ENCODE measurements at regions of chr11 and their contacts with region 1.

Region 1: DNA sequence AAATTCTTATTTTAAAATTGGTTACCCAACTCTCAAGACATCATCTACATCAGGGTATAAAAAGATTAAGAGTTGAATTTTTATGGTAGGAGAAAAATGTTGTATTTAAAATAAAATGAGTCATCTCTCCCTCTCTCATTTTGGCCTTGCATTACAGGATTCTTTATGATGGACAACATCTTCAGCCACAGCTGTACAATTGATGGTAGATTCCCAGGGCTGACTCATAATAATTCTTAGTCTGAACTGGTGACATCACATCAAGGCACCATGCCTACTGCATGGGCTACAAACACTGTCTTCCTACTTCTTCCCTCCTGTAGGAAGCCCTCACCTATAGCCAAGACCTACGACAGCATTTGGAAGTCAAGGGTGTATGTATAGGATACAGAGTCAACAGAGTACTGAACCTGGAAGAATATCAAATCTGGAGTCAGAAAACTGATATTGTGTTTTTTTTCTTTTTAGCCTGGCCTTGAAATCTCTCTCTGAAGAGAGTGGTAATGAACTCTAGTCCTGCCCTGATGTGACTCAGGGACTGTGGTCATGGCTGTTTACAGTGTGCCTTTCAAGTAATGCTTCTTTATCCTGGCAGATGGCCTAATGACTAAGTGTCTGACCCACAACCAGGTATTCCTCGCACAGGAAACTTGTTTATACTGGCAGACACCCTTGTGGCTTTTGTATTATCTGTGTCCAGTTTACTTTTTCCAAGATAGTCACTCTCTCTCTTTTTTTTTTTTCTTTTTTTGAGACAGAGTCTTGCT is 32.5 kb downstream of the MRGPRX2 start:
- DNase-seq: peak; percentile 60 to 94
- H3K4me3 ChIP-seq: no peak overlapping the region
- H3K27ac ChIP-seq: peak overlapping the region; percentile 71
- H3K4me1 ChIP-seq: peaks cover 20% of the 10 kb centered on the region
- H3K27me3 ChIP-seq: peaks cover 47% of the 10 kb centered on the region
- CTCF ChIP-seq: no peak

Region 2: DNA sequence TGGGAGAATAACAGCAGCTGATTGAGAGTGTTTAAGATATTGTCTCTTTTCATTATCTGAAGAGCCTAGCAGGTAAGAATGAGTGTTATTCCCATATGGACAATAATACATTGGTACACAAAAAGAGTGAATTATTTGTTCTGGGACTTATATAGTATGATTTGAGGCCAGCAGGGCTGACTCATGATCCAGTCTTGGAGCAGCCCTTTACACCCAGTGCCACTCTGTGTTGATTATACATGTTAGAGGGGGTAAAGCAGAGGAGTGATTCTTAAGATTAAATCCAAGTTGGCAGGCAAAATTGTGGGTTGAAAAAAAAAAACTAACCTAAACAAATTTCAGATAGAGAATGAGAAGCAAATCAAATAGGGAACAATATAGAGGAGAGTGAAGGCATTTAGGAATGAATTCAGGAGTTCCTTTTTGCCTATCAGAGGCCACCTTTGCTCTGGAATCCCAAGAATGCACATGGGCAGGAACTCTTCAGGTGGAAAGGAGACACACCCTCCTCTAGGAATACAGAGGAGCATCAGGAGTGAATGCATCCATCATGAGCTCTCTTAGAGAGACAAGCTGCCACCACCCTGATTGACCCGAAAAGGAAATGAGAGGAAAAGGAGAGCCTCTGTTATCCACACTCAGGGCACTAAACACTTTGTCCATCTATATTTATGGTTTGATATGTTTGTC is 69.6 kb before region 1 on chr11:
- CTCF ChIA-PET with region 1: no interaction called
- POLR2A ChIA-PET with region 1: no interaction called
- intact Hi-C with region 1: loop called (anchors 2 kb)
- DNase-seq: peak; percentile 56 to 79
- H3K4me3 ChIP-seq: peak overlapping the region; percentile 6; the same call in 1 of the 2 replicates
- H3K27ac ChIP-seq: peak overlapping the region; percentile 70
- H3K4me1 ChIP-seq: peaks cover 26% of the 10 kb centered on the region
- H3K27me3 ChIP-seq: no peaks in the 10 kb centered on the region
- CTCF ChIP-seq: no peak

Region 3: GRCh38 chr11:18974192-18974591 is 53.8 kb before region 1 on chr11:
- CTCF ChIA-PET with region 1: no interaction called
- POLR2A ChIA-PET with region 1: no interaction called
- intact Hi-C with region 1: no loop called
- DNase-seq: no peak
- H3K4me3 ChIP-seq: no peak overlapping the region
- H3K27ac ChIP-seq: no peak overlapping the region
- H3K4me1 ChIP-seq: no peaks in the 10 kb centered on the region
- H3K27me3 ChIP-seq: peaks cover 35% of the 10 kb centered on the region
- CTCF ChIP-seq: no peak

Region 4: DNA sequence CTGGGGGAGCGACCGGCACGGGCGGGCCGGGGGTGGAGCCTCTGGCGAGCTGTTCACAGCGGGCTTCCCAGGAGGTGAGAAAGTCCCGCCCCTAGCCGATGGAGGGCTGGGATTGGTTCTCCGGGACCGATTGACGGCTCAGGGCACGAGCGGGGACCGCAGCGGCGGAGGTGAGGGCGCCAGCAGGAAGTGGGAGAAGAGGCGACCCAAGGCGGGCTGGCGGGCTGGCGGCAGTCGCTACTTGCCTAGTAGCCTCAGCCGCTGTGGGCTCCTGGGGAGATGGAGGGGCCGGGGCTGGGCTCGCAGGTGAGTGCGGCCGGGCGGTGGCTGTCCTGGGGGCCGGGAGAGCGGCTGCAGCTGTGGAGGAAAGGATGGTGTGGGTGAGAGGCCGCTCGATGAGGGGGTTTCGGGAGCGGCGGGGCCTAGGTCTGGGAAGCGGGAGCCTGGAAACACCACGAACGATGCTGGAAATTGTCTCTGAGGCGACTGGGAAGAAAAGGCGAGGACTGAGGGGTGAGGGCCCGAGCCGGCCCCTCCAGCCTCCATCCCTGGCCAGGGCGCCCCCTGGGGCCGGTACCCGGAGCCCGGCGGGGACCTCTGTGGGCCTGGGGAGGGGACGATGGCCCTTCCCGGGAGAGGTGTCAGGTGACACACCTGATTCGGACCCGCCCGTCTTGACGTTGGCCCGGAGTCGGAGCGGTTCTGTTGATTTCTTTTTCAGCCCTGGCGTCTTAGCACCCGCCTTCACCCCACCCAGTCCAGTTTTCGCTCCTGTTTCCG is 89.1 kb after region 1 on chr11 and contains the start of gene ZDHHC13:
- CTCF ChIA-PET with region 1: no interaction called
- POLR2A ChIA-PET with region 1: no interaction called
- intact Hi-C with region 1: no loop called
- DNase-seq: peak; percentile 91 to 99
- H3K4me3 ChIP-seq: peak within 1 kb of the TSS; percentile 87
- H3K27ac ChIP-seq: peak within 1 kb of the TSS; percentile 86
- H3K4me1 ChIP-seq: peaks cover 37% of the 10 kb centered on the region
- H3K27me3 ChIP-seq: no peaks in the 10 kb centered on the region
- CTCF ChIP-seq: peak; percentile 67; the same call in 1 of the 2 replicates
- total RNA-seq, gene ZDHHC13: 31.5 and 35.5 TPM in 2 replicates